GM10248 (cell line): ENCODE measurements at regions of chr3 and their contacts with region 1.

Region 1: GRCh38 chr3:113514265-113514769 is 639 bp downstream of the SPICE1 start:
- DNase-seq: no peak
- CTCF ChIP-seq: no peak

Region 2: GRCh38 chr3:113552851-113553250 is 38.5 kb after region 1 on chr3:
- CTCF ChIA-PET with region 1: interaction called, 13 read pairs
- POLR2A ChIA-PET with region 1: interaction called, 3 read pairs
- DNase-seq: peak; percentile 33
- CTCF ChIP-seq: peak; percentile 36